ENCODE measurements at regions of chr5 and their contacts with region 1.

Region 1: GRCh38 chr5:174910245-174910737 is 185.9 kb downstream of the MSX2 start:
- DNase-seq: peak; percentile 77
- H3K4me3 Mint-ChIP-seq: no peak overlapping the region
- H3K27ac Mint-ChIP-seq: no peak overlapping the region
- H3K4me1 Mint-ChIP-seq: no peaks in the 10 kb centered on the region
- H3K27me3 Mint-ChIP-seq: peaks cover 43% of the 10 kb centered on the region
- CTCF ChIP-seq: peak; percentile 99

Region 2: GRCh38 chr5:174920906-174921550 is 10.7 kb after region 1 on chr5:
- CTCF ChIA-PET with region 1: interaction called, 19 read pairs
- POLR2A ChIA-PET with region 1: interaction called, 3 read pairs
- intact Hi-C with region 1: no loop called
- DNase-seq: no peak
- H3K4me3 Mint-ChIP-seq: no peak overlapping the region
- H3K27ac Mint-ChIP-seq: no peak overlapping the region
- H3K4me1 Mint-ChIP-seq: no peaks in the 10 kb centered on the region
- H3K27me3 Mint-ChIP-seq: no peaks in the 10 kb centered on the region
- CTCF ChIP-seq: no peak

Region 3: DNA sequence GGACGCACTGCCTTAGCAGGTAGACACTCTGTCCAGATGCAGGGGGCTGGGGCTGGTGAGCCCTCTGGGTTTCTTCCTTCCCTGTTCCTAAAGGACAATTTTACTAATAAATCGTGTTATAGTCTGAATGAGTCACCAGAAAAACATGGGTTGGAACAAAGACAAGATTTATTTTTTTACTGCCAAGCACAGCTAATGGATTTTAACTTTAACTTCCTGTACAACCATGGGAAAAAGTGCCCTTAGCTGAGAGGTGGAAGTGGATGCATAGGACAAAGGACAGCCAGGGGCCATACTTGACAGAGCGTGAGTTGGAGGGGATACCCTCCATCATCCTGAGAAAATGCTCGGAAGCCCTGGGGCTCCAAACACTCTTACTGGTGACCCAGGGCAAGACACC is 114.8 kb after region 1 on chr5:
- CTCF ChIA-PET with region 1: no interaction called
- POLR2A ChIA-PET with region 1: no interaction called
- intact Hi-C with region 1: no loop called
- DNase-seq: no peak
- H3K4me3 Mint-ChIP-seq: no peak overlapping the region
- H3K27ac Mint-ChIP-seq: no peak overlapping the region
- H3K4me1 Mint-ChIP-seq: no peaks in the 10 kb centered on the region
- H3K27me3 Mint-ChIP-seq: peaks cover 20% of the 10 kb centered on the region
- CTCF ChIP-seq: no peak

Measured in MCF 10A (cell line).